Caco-2 (cell line): ENCODE measurements at regions of chr1 and their contacts with region 1.

Region 1: DNA sequence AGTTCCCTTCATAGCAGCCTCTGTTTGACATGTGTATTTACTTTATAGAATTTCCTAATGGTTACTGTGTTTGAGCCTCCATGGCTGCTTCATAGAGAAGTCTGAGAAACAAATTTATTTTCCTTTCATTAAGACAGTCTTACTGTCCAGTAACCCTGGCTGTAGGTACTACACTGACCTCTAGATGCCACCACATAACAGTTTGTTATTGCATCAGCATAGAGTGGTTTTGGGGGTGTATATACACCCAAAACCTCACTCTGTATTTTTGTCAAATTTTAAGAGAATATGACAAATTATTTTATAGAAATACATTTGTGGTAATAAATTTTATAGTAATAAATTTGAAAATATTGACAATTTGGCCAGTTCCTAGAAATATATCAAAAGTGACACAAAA is 57.3 kb downstream of the OBSCN start:
- DNase-seq: no peak
- H3K4me3 ChIP-seq: no peak overlapping the region
- H3K4me3 Mint-ChIP-seq: no peak overlapping the region
- H3K27ac Mint-ChIP-seq: no peak overlapping the region
- H3K4me1 ChIP-seq: no peaks in the 10 kb centered on the region
- H3K4me1 Mint-ChIP-seq: no peaks in the 10 kb centered on the region
- H3K27me3 ChIP-seq: no peaks in the 10 kb centered on the region
- H3K27me3 Mint-ChIP-seq: no peaks in the 10 kb centered on the region
- CTCF ChIP-seq: peak in 1 of 2 experiments; percentile 43

Region 2: DNA sequence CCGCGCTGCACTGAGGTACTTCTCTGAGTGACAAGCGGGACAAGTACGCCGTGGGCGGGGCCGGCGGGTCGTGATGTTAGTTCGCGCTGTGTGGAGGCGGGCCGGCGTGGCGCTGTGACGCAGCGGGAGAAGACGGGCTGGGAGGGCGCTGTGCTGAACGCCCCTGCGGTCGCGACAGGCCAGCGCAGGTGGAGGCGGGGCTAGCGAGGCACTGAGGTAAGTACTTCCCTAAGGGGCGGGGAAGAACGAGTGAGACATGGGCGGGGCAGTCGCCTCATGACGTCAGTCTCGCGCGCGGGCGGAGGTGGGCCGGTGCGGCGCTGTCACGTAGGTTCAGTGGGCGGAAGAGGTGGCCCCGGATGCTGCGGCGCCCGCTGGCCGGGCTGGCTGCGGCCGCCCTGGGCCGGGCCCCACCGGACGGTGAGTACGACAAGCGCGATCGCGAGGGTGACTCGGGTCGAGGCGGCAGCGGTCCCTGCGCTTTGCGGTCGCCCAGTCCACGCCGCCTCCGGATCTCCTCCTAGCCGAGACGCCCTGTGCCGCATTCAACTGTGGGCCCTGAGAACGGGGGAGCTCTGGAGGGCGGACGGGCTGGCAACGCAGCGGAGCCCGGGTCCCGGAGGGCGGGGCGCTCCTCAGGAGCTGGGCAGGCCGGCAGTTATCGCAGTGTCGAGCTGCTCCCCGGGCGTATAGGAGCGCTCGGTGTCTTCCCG is 125.1 kb before region 1 on chr1 and contains the start of gene GUK1:
- CTCF ChIA-PET with region 1: no interaction called
- POLR2A ChIA-PET with region 1: no interaction called
- intact Hi-C with region 1: loop called (anchors 10 kb)
- DNase-seq: peak; percentile 100
- H3K4me3 ChIP-seq: peak within 1 kb of the TSS; percentile 90
- H3K4me3 Mint-ChIP-seq: peak within 1 kb of the TSS; percentile 85
- H3K27ac Mint-ChIP-seq: peak within 1 kb of the TSS; percentile 91
- H3K4me1 ChIP-seq: peaks cover 5% of the 10 kb centered on the region
- H3K4me1 Mint-ChIP-seq: no peaks in the 10 kb centered on the region
- H3K27me3 ChIP-seq: no peaks in the 10 kb centered on the region
- H3K27me3 Mint-ChIP-seq: no peaks in the 10 kb centered on the region
- CTCF ChIP-seq: peak in 1 of 2 experiments; percentile 23
- total RNA-seq, gene GUK1: 73.6 and 74.4 TPM in 2 replicates

Region 3: GRCh38 chr1:228393248-228393699 is 128.1 kb after region 1 on chr1:
- CTCF ChIA-PET with region 1: no interaction called
- POLR2A ChIA-PET with region 1: no interaction called
- intact Hi-C with region 1: loop called (anchors 5 kb)
- DNase-seq: peak; percentile 35 to 36
- H3K4me3 ChIP-seq: no peak overlapping the region
- H3K4me3 Mint-ChIP-seq: no peak overlapping the region
- H3K27ac Mint-ChIP-seq: no peak overlapping the region
- H3K4me1 ChIP-seq: no peaks in the 10 kb centered on the region
- H3K4me1 Mint-ChIP-seq: no peaks in the 10 kb centered on the region
- H3K27me3 ChIP-seq: no peaks in the 10 kb centered on the region
- H3K27me3 Mint-ChIP-seq: no peaks in the 10 kb centered on the region
- CTCF ChIP-seq: peak; percentile 26 to 34